ENCODE measurements at regions of chr3 and their contacts with region 1.

Region 1: DNA sequence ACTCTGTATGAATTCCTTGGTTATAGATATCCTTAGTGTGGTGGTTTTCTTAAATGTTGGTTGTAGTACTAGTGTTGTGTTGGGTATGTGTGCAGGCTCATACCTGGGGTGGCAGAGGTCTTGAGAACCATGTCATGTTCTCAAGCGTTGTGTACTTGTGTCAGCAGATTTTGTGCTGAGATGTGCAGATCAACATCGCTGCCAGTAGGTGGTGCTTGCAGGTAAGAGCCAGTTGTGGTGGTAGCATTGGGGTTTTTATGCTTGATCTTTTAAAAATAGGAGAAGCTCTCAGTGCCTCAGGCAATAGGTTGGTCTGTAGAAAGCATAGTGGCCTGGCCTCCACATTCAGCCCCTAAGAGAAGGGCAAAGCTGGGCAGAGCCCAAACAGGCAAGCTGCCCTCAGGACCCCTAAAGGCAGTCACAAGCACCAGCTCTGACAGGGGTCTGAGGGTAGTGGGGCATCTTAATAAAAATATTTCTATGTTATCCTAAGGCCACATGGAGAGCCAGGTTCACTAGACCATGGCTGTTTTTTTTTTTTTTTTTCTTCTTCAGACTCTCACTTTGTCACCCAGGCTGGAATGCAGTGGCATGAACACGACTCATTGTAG is 164.0 kb downstream of the IL20RB start:
- DNase-seq: peak in 5 of 9 donors; percentile 4 to 25 (median 15)
- ATAC-seq: peak; percentile 29
- H3K4me3 ChIP-seq: no peak overlapping the region
- H3K4me3 Mint-ChIP-seq: no peak overlapping the region
- H3K27ac ChIP-seq: no peak overlapping the region
- H3K27ac Mint-ChIP-seq: no peak overlapping the region
- H3K4me1 ChIP-seq: no peaks in the 10 kb centered on the region
- H3K4me1 Mint-ChIP-seq: no peaks in the 10 kb centered on the region
- H3K27me3 ChIP-seq: no peaks in the 10 kb centered on the region
- H3K27me3 Mint-ChIP-seq: peaks cover 3 to 16% (median 8%) of the 10 kb centered on the region in 5 donors

Region 2: DNA sequence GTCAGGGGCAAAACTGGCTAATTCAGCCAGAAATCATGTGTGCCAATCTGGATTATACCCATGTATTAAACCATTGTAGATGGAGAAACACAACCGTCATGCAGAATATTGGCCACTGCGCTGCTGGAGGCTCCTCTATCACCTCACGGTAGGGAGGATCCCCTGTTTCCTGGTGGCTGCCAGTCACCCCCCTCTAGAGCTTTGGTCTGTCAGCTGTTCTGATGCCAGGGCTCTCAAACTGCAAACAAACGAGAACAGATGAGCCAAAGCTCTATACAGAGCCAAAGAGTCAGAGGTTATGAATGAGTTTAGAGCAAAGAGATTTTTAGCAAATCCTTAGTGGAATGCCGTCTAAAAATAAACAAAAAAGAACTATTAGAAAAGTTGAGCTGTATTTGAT is 101.5 kb before region 1 on chr3:
- CTCF ChIA-PET with region 1: no interaction called
- POLR2A ChIA-PET with region 1: no interaction called
- intact Hi-C with region 1: no loop called
- DNase-seq: no peak
- ATAC-seq: no peak
- H3K4me3 ChIP-seq: no peak overlapping the region
- H3K4me3 Mint-ChIP-seq: no peak overlapping the region
- H3K27ac ChIP-seq: no peak overlapping the region
- H3K27ac Mint-ChIP-seq: no peak overlapping the region
- H3K4me1 ChIP-seq: no peaks in the 10 kb centered on the region
- H3K4me1 Mint-ChIP-seq: no peaks in the 10 kb centered on the region
- H3K27me3 ChIP-seq: no peaks in the 10 kb centered on the region
- H3K27me3 Mint-ChIP-seq: peaks cover 0 to 13% (median 11%) of the 10 kb centered on the region in 5 donors

Region 3: DNA sequence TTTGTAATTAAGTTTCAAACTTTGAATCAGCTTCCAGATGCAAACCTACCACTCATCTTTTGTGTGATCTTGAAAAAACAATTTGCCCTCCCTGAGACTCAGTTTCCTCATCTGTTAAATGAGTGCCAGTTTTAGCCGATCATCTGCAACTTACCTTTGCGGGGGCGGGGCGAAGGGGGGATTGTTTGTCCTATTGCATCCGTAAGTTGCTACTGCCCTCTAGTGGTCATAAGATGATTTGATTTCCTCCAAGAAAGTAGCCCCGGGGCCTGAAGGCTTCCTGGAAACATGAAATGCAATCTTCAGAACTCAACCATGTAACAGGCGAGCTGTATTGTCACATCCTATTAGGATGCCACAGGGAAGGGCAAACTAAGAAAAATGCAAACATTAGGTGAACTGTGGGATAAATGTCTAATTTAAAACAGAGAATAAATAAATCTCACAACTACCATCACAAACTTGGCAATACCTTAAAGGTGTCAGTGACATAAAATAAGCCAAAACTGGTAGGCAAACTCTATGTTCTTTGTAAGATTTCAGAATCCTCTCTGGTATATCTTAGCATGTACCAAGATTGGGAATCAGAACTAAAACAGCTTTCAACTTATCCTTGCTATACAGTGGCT is 824.6 kb after region 1 on chr3:
- CTCF ChIA-PET with region 1: interaction called, 3 read pairs
- POLR2A ChIA-PET with region 1: no interaction called
- intact Hi-C with region 1: loop called in 1 of 2 experiments (anchors 5 kb)
- DNase-seq: peak in 8 of 9 donors; percentile 12 to 61 (median 52)
- ATAC-seq: peak; percentile 47
- H3K4me3 ChIP-seq: no peak overlapping the region
- H3K4me3 Mint-ChIP-seq: peak overlapping the region in 1 of 10 donors; percentile 40
- H3K27ac ChIP-seq: no peak overlapping the region
- H3K27ac Mint-ChIP-seq: peak overlapping the region in 1 of 9 donors; percentile 28
- H3K4me1 ChIP-seq: no peaks in the 10 kb centered on the region
- H3K4me1 Mint-ChIP-seq: peaks cover 0 to 7% (median 5%) of the 10 kb centered on the region in 7 donors
- H3K27me3 ChIP-seq: no peaks in the 10 kb centered on the region
- H3K27me3 Mint-ChIP-seq: peaks cover 0 to 5% (median 4%) of the 10 kb centered on the region in 5 donors

Measured in naive thymus-derived CD4-positive, alpha-beta T cell (primary cell).